A549 (cell line): ENCODE measurements at regions of chr17 and their contacts with region 1.

Region 1: DNA sequence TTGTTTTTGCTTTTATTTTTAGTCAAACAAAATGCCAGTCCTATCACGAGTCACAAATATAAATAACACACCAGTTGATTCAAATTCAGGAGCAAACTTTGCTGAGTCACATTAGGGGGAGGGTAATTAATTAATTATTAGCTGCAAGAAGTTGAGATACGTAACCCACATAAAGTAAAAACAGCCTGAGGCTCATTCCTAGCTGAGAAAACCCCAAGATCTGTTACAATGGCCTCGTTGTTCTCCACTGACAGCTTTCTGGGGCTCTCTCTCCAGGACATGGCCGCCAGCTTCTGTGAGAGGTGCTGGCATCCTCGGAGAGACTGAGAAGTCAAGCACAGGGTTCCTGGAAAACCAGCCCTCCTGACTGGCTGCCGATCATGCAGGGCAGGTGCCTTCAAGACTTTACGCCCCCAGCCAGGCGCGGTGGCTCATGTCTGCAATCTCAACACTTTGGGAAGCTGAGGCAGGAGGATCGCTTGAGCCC is 11.1 kb downstream of the RAB40B start:
- DNase-seq: peak; percentile 83
- ATAC-seq: peak; percentile 48 to 75; a peak in 5 of 6 replicates
- H3K4me3 ChIP-seq: 0 out of 3 replicates have a peak overlapping the region, but pooled peaks have one; percentile 2
- H3K27ac ChIP-seq: peak overlapping the region; percentile 87 to 89
- H3K4me1 ChIP-seq: peaks cover 41% of the 10 kb centered on the region
- CTCF ChIP-seq: no peak
- EP300 ChIP-seq: peak in 1 of 2 experiments; percentile 17; a peak in 1 of 5 replicates
- POLR2A ChIP-seq: no peak
- RAD21 ChIP-seq: peak in 1 of 2 experiments; percentile 15; a peak in 1 of 5 replicates

Region 2: DNA sequence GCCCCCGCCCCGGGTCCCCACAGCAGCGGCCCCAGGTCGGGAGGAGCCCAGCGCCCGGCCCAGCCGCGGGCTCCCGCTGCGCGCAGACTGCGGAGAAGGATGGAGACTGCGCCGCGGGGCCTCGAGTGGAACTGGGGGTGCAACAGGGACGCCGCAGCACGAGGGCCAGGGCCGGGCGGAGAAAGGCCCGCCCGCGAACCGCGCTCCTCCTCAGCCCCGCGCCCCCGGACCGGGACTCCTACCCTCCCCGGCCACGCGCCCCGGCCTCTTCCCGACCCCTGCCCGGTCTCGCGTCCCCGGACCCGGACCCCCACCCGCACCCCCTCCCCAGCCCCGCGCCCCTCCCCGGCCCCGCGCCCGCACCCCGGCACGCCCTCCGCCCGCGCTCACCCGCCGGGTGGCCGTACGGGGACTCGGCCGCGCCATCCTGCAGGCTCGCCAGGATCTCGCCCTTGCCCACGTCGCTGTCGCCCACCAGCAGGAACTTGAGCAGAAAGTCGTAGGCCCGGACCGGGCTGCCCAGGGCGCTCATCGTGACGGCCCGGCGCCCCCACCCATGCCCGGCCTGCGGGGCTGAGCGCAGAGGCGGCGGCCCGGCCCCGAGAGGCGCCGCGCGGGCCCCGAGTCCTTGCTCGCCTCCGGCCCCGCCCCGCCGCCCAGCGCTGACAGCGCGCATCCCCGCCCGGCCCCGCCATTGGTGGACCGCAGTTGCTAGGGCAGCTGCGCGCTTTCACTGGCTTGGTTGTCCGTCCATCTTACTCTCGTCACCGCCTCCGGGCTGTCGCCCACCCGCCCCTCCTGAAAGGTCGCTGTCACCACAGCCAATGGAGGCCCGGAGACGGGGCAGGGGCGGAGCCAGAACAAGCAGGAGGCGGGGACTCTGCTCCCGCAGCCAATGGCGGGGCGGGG is 10.9 kb after region 1 on chr17 and contains the start of gene RAB40B:
- CTCF ChIA-PET with region 1: interaction called, 11 read pairs
- POLR2A ChIA-PET with region 1: no interaction called
- DNase-seq: peak; percentile 99 to 100
- ATAC-seq: peak; percentile 95 to 97
- H3K4me3 ChIP-seq: peak within 1 kb of the TSS; percentile 60
- H3K27ac ChIP-seq: peak within 1 kb of the TSS; percentile 47 to 83
- H3K4me1 ChIP-seq: peaks cover 25% of the 10 kb centered on the region
- CTCF ChIP-seq: no peak
- EP300 ChIP-seq: no peak
- POLR2A ChIP-seq: no peak
- RAD21 ChIP-seq: no peak
- polyA plus RNA-seq, gene RAB40B: 5.6 and 5.8 TPM in 2 replicates

Region 3: GRCh38 chr17:82985973-82986372 is 298.6 kb after region 1 on chr17:
- CTCF ChIA-PET with region 1: no interaction called
- POLR2A ChIA-PET with region 1: no interaction called
- DNase-seq: no peak
- ATAC-seq: no peak
- H3K4me3 ChIP-seq: no peak overlapping the region
- H3K27ac ChIP-seq: no peak overlapping the region
- H3K4me1 ChIP-seq: no peaks in the 10 kb centered on the region
- CTCF ChIP-seq: no peak
- EP300 ChIP-seq: no peak
- POLR2A ChIP-seq: no peak
- RAD21 ChIP-seq: no peak